Left ventricle myocardium superior (tissue), 1 donor: ENCODE measurements at regions of chr7 and their contacts with region 1.

Region 1: DNA sequence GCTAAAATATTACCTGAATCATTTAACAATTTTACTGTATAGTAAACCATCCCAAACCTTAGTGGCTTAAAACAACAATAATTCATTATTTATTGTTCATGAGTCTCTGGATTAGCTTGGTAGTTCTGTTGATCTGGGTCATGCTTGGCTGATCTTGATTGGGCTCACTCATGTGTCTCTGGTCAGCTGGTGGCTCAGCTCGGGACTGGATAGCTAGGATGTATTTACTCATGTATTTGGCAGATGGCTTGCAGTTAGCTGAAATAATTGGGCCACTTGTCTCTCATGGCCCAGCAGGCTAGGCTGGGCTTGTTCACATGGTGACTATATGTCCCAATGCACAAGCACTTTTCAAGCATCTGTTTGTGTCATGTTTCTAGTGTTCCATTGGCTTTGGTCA is 262.8 kb downstream of the BBS9 start:
- DNase-seq: no peak
- ATAC-seq: no peak

Region 2: GRCh38 chr7:33310541-33310940 is 81.6 kb before region 1 on chr7:
- intact Hi-C with region 1: loop called (anchors 2 kb)
- DNase-seq: no peak
- ATAC-seq: no peak